ENCODE measurements at regions of chr9 and their contacts with region 1.

Region 1: DNA sequence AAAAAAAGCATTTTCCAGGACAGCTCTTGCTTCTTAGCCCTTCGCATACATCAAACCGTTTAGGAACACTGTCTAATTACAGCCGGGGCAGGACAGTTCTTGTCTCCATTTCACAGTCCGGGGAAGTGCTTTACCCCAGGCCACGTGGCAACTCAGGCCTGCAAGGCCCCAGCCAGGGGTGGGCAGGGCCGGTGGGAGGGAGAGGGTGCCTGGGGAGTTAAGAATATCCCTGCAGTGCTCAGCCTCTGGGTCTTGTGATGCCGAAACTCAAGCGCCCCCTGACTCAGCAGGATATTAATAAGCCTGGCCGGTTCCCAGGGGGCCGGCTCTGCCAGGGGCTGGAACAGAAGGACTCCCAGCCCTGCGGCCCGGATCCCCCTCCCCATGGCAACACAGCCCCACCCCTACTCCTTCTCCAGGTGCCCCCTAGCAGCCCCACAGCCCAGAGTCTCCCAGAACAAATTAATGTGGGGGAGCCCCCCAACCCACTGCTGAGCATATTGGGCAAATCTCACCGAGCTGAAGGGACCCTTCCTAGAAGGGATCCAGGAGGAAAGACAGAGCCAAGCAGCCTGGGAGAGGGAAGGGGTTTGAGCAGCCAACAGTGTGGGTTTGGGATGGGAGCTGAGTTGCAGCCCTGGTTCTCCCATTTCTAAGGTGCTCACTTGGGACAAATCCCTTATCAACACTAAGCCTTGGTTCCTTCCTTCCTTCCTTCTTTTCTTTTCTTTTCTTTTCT is 45.3 kb downstream of the PLPP7 start:
- DNase-seq: peak; percentile 62 to 81
- ATAC-seq: peak; percentile 57
- H3K4me3 ChIP-seq: no peak overlapping the region
- H3K27ac ChIP-seq: peak overlapping the region in 1 of 2 donors; percentile 17
- H3K4me1 ChIP-seq: no peaks in the 10 kb centered on the region
- H3K27me3 ChIP-seq: no peaks in the 10 kb centered on the region

Region 2: DNA sequence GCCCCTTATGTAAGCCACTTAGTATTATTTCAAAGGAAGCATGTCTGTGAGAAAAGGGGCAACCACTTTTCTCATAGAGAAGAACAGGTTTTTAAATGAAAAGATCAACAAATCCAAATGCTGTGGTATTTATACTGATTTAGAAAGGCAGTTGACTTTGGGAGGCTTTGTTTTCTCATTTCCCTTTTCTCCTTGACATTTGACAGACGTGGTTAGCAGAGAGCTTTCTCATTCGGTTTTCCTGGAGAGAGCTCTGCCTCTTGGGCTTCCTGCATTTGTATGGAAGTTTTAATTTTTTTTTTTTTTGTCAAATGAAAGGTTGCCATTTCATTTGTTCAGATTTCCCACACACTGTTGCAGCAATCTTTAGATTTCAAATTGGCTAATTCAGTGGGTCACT is 578.8 kb before region 1 on chr9:
- intact Hi-C with region 1: no loop called
- DNase-seq: no peak
- ATAC-seq: no peak
- H3K4me3 ChIP-seq: no peak overlapping the region
- H3K27ac ChIP-seq: no peak overlapping the region
- H3K4me1 ChIP-seq: peaks cover 0 to 5% of the 10 kb centered on the region in 2 donors
- H3K27me3 ChIP-seq: no peaks in the 10 kb centered on the region

Region 3: GRCh38 chr9:131019388-131020239 is 315.2 kb before region 1 on chr9:
- intact Hi-C with region 1: no loop called
- DNase-seq: peak; percentile 67 to 85
- ATAC-seq: peak; percentile 79
- H3K4me3 ChIP-seq: no peak overlapping the region
- H3K27ac ChIP-seq: peak overlapping the region in 1 of 2 donors; percentile 75
- H3K4me1 ChIP-seq: no peaks in the 10 kb centered on the region
- H3K27me3 ChIP-seq: no peaks in the 10 kb centered on the region

Region 4: DNA sequence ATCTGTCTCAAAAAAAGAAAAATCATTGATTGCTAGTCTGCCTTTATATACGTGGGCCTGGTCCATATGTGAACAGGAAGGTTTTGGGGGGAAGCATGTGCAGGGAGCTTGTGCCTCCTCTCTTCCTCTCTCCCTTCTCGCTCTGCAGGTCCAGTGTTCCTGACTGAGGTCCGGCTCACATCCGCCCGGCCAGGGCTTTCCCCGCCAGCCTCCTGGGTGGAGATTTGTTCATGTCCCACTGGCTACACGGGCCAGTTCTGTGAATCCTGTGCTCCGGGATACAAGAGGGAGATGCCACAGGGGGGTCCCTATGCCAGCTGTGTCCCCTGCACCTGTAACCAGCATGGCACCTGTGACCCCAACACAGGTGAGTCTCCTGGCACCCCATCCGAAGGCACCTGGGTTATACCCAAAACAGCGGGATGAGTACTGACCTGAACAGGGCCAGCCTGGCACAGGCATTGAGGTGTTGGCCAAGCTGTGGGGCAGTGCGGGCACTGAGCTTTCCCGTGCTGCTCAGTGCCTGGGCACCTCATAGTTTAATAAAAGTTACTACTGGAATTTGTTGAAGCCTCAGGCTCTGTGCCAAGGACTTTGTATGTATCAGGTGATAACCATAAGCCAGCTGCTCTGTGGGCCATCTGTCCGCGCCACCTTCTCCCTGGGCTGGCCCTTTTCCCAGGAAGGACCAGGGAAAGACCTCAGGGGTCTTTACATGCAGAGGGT is 277.9 kb before region 1 on chr9:
- intact Hi-C with region 1: loop called (anchors 5 kb)
- DNase-seq: no peak
- ATAC-seq: no peak
- H3K4me3 ChIP-seq: no peak overlapping the region
- H3K27ac ChIP-seq: no peak overlapping the region
- H3K4me1 ChIP-seq: no peaks in the 10 kb centered on the region
- H3K27me3 ChIP-seq: no peaks in the 10 kb centered on the region

Region 5: GRCh38 chr9:131178382-131178781 is 156.4 kb before region 1 on chr9:
- intact Hi-C with region 1: loop called (anchors 2 kb)
- DNase-seq: peak in 1 of 2 donors; percentile 63
- ATAC-seq: peak; percentile 92
- H3K4me3 ChIP-seq: no peak overlapping the region
- H3K27ac ChIP-seq: no peak overlapping the region
- H3K4me1 ChIP-seq: no peaks in the 10 kb centered on the region
- H3K27me3 ChIP-seq: no peaks in the 10 kb centered on the region

Region 6: DNA sequence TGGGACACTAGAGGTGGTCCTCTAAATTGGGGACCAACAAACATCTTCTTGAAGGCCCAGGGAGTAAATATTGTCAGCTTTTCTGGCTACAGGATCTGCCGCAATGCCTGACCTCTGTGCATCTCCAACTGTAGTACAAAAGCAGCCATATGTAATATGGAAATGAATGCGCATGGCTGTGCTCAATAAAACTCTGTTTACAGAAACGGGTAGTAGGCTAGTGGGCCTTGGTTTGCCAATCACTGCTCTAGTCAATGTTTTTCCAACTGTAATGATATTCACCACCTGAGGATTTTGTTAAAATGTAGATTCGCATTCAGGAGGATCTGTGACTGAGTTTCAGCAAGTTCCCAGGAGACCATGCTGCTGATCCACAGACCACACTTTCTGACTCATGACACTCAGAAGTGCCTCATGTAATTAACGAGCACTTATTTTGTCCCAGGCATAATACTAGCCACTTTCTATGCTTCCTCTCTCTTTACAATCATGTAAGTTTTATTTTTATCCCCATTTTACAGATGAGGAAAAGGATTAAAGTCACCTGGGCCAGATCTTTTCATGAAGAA is 648.0 kb after region 1 on chr9:
- intact Hi-C with region 1: no loop called
- DNase-seq: no peak
- ATAC-seq: no peak
- H3K4me3 ChIP-seq: no peak overlapping the region
- H3K27ac ChIP-seq: no peak overlapping the region
- H3K4me1 ChIP-seq: no peaks in the 10 kb centered on the region
- H3K27me3 ChIP-seq: no peaks in the 10 kb centered on the region

Measured in aorta (tissue), 5 donors.